ENCODE measurements at regions of chr6 and their contacts with region 1.

Region 1: DNA sequence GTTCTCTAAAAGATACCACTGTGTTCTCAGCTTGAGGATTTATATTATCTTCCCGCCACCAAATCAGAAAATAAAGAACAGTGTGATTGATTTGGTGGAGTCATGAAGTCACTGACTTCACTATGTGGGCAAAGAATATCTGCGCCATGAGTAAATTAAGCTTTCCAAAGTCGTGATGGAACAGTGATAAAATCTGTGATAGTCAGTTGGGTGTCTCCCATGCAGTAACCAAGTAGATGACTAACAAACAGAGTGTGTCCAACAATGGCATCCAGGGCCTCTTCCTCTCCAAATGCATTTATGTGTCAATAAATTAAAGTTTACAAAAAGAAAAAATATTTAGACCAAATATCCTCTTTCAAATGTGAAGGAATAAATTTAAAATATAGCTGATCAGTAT is 87.0 kb upstream of the DST start:
- DNase-seq: no peak
- H3K4me3 ChIP-seq: no peak overlapping the region
- CTCF ChIP-seq: no peak
- POLR2A ChIP-seq: no peak

Region 2: DNA sequence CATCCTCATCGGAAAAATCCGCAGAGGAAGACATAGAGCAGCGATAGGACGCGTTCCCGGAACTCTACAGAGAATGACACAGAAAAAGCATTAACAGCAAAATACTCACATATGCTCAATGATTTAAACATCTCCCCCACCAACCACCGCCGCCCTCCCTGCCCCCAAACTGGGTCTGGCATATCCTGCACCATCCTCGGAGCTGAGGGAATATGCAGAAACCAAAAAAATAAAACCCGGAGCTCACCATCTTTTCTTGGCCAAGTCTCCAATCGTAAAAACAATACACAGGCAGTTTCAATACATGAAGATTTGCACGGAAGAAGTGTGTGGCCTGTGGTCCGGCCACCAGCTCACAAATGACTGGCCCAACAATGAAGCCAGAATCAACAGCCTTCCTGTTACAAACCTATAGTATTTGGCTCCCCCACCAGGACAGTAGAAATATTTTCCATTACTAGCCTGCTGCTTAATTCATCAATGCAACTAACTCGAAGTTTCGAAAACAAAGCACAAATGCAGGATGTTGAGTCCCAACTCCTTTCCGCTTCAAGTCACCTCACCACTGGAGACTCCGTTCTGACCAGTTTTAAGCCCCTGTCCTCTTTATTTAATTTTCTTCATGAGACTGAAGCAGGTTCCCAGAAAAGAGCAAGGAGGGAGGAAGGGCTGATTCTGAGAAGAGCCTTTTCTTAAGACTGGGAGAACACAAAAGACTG is 122.0 kb after region 1 on chr6:
- intact Hi-C with region 1: loop called (anchors 10 kb)
- DNase-seq: peak in 1 of 2 donors; percentile 45
- H3K4me3 ChIP-seq: peak overlapping the region; percentile 26
- CTCF ChIP-seq: no peak
- POLR2A ChIP-seq: no peak

Measured in lower leg skin (tissue), 4 donors.